ENCODE measurements at regions of chr7 and their contacts with region 1.

Region 1: GRCh38 chr7:150994141-150994964 is 3.5 kb downstream of the NOS3 start:
- DNase-seq: peak; percentile 90
- H3K4me3 ChIP-seq: peak overlapping the region; percentile 43 to 67 (median 60)
- H3K27ac ChIP-seq: peak overlapping the region; percentile 10
- H3K4me1 ChIP-seq: peaks cover 30% of the 10 kb centered on the region
- H3K27me3 ChIP-seq: no peaks in the 10 kb centered on the region
- CTCF ChIP-seq: no peak
- POLR2A ChIP-seq: peak; percentile 67

Region 2: DNA sequence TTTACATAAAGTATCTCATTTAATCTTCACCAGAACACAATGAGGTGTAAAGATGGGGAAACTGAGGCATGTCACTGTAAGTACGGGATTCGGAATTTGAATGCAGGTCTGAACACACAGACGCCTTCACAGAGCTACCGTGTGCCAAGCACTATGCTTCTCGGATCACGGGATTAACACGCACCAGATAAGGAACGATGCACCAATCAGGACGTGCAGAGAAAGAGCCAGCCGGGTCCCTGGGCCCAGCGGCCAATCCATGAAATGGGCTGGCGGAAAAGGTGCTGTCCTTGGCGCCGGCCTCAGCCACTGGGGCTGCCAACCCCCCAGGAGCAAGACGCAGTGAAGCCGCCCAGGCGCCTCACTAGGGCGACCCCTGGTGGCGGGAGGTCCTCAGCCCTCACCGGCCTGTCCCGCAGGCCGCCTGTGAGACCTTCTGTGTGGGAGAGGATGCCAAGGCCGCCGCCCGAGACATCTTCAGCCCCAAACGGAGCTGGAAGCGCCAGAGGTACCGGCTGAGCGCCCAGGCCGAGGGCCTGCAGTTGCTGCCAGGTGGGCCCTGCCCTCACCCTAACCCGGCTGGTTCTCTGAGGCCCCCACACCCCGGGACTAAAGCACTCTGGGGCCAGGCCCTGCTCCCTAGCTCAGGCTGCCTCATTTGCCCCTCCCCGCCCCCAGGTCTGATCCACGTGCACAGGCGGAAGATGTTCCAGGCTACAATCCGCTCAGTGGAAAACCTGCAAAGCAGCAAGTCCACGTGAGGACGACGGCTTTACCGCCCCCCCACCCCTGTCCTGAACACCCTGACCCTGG is 14.4 kb after region 1 on chr7:
- CTCF ChIA-PET with region 1: interaction called, 68 read pairs
- POLR2A ChIA-PET with region 1: interaction called, 8 read pairs
- dilution Hi-C with region 1: no loop called
- intact Hi-C with region 1: loop called (anchors 1 kb)
- DNase-seq: peak; percentile 62
- H3K4me3 ChIP-seq: no peak overlapping the region
- H3K27ac ChIP-seq: peak overlapping the region; percentile 23
- H3K4me1 ChIP-seq: peaks cover 44% of the 10 kb centered on the region
- H3K27me3 ChIP-seq: no peaks in the 10 kb centered on the region
- CTCF ChIP-seq: peak; percentile 96 to 98
- POLR2A ChIP-seq: peak; percentile 49

Measured in endothelial cell of umbilical vein (primary cell).